A549 (cell line): ENCODE measurements at regions of chr9 and their contacts with region 1.

Region 1: GRCh38 chr9:37656936-37657335 is 6.2 kb downstream of the FRMPD1 start:
- DNase-seq: no peak
- ATAC-seq: no peak
- H3K4me3 ChIP-seq: no peak overlapping the region
- H3K27ac ChIP-seq: no peak overlapping the region
- H3K4me1 ChIP-seq: no peaks in the 10 kb centered on the region
- CTCF ChIP-seq: no peak
- EP300 ChIP-seq: no peak
- POLR2A ChIP-seq: no peak
- RAD21 ChIP-seq: no peak

Region 2: GRCh38 chr9:37668116-37668601 is 11.2 kb after region 1 on chr9:
- CTCF ChIA-PET with region 1: interaction called, 10 read pairs
- POLR2A ChIA-PET with region 1: no interaction called
- DNase-seq: peak in 1 of 2 experiments; percentile 24
- ATAC-seq: peak; percentile 78 to 87
- H3K4me3 ChIP-seq: no peak overlapping the region
- H3K27ac ChIP-seq: no peak overlapping the region
- H3K4me1 ChIP-seq: no peaks in the 10 kb centered on the region
- CTCF ChIP-seq: no peak
- EP300 ChIP-seq: no peak
- POLR2A ChIP-seq: no peak
- RAD21 ChIP-seq: no peak